CD14-positive monocyte (primary cell): ENCODE measurements at regions of chr1 and their contacts with region 1.

Region 1: DNA sequence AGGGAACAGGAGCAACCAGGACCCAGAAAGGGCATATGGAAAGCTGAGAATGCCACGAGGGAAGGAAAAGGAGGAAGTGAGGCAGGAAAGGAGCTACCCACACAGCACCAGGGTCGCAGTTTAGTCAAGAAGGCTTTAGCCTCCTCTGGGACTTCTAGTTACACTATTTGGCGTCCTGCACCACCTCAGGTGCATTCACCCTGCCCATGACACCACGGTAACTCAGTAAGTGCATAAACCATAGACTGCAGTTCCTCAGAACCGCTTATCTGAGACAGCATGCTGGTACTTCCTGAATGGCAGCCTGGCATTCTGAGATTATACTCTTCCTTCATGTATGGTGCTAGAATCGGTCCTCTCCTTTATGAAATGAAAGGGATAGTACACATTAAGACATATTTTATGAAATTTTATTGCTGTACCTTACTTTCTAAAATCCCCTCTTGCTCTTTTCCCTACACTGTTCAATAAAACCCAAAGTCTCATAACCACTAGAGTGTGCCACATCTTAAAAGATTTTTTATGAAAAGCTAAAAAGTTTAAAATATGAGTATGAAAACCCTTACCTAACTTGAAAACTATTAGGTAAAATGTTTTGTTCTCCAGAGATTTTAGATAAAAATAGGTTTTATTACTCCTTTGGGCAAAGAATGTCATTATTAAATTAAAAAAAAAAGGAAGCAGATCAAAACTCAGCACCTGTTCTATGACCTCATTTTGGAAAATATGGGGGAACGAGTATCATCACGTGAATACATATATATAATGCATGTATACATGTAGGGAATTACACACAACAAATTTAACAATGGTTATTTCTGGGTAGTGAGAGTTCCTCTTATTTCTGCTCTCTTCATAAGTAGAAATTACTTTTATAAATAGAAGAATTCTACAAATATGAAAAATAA is 67.3 kb downstream of the VAV3 start:
- DNase-seq: peak in 2 of 3 donors; percentile 36 to 37
- H3K4me3 ChIP-seq: peak overlapping the region; percentile 31 to 70 (median 50)
- H3K4me3 Mint-ChIP-seq: peak overlapping the region; percentile 69 to 92
- H3K27ac ChIP-seq: peak overlapping the region in 1 of 2 donors; percentile 73
- H3K27ac Mint-ChIP-seq: peak overlapping the region in 5 of 7 donors; percentile 62 to 87 (median 78)
- H3K4me1 ChIP-seq: peaks cover 22 to 28% of the 10 kb centered on the region in 2 donors
- H3K4me1 Mint-ChIP-seq: peaks cover 50% of the 10 kb centered on the region
- H3K27me3 ChIP-seq: no peaks in the 10 kb centered on the region
- H3K27me3 Mint-ChIP-seq: peaks cover 0 to 2% (median 0%) of the 10 kb centered on the region in 3 donors
- CTCF ChIP-seq: no peak

Region 2: DNA sequence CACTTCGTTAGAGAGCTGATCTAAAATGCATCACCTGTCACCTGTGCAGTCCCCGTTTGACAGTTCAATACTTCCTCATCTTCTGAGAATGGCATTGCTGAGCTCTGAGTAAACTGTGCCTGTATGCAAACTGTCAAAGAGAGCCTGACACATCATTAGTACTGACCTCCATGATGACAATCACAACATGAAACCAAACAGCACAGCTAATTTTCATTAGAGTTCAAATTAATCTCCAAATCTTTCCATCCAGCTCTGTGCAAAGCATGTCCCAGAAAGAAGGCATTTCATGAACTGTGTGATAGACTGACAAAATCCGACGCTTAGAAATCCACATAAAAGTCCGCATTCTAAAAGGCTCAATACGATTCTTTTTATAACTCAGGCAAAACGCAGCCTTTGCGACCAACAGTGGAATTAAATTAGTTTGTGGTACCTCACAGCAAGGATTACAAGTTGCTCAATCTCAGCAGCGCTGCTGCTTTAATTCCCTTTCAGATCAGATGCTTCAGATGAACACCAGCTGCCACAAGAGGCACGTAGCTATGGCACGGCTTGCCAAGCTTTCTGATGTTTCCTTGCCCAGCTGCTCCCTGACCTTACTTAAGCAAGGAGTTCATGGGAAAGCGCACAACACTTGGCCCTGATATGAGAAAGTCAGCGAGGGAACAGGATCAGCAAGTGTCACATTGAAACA is 1606.7 kb before region 1 on chr1:
- intact Hi-C with region 1: no loop called
- DNase-seq: no peak
- H3K4me3 ChIP-seq: no peak overlapping the region
- H3K4me3 Mint-ChIP-seq: no peak overlapping the region
- H3K27ac ChIP-seq: no peak overlapping the region
- H3K27ac Mint-ChIP-seq: no peak overlapping the region
- H3K4me1 ChIP-seq: no peaks in the 10 kb centered on the region
- H3K4me1 Mint-ChIP-seq: no peaks in the 10 kb centered on the region
- H3K27me3 ChIP-seq: no peaks in the 10 kb centered on the region
- H3K27me3 Mint-ChIP-seq: no peaks in the 10 kb centered on the region
- CTCF ChIP-seq: no peak

Region 3: DNA sequence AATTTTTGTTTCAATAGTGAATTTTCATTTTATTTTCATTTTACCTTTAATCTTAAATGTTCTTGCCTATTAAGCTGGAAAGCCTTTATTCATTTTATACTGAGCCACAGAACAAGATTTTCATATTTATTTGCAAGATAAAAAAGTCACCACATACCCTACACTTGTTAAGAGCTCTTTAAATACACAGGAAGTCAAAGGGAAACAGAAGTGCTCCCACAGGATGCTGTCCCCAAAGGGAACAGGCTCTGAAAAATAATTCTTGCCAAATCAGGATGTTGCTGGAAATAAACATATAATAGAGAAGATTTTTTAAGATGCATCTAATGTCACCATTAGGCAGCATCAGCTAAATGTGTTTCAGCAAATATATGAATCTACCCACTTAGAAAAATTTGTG is 46.3 kb before region 1 on chr1:
- intact Hi-C with region 1: loop called in 1 of 2 experiments (anchors 10 kb)
- DNase-seq: no peak
- H3K4me3 ChIP-seq: no peak overlapping the region
- H3K4me3 Mint-ChIP-seq: no peak overlapping the region
- H3K27ac ChIP-seq: no peak overlapping the region
- H3K27ac Mint-ChIP-seq: no peak overlapping the region
- H3K4me1 ChIP-seq: no peaks in the 10 kb centered on the region
- H3K4me1 Mint-ChIP-seq: peaks cover 22% of the 10 kb centered on the region
- H3K27me3 ChIP-seq: no peaks in the 10 kb centered on the region
- H3K27me3 Mint-ChIP-seq: no peaks in the 10 kb centered on the region
- CTCF ChIP-seq: no peak

Region 4: DNA sequence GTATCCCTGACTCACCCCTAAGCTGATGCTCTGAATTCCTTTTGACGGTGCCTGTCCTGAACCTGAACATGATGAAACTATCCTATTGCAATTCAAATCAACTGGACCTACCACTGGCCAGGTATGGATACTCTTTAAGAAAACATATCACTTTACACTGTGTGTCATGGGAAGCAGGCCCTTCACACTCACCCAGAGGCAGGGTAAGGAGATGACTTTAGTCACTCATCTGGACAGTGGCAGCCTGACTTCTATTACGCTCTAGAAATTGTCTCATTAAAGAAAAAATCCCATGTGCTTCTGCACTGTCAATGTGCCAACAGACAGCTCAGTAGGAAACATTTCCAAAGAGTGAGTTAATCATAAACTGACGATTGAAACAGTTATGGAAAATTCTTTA is 27.0 kb before region 1 on chr1:
- intact Hi-C with region 1: no loop called
- DNase-seq: no peak
- H3K4me3 ChIP-seq: no peak overlapping the region
- H3K4me3 Mint-ChIP-seq: no peak overlapping the region
- H3K27ac ChIP-seq: no peak overlapping the region
- H3K27ac Mint-ChIP-seq: no peak overlapping the region
- H3K4me1 ChIP-seq: peaks cover 25 to 33% of the 10 kb centered on the region in 2 donors
- H3K4me1 Mint-ChIP-seq: peaks cover 44% of the 10 kb centered on the region
- H3K27me3 ChIP-seq: no peaks in the 10 kb centered on the region
- H3K27me3 Mint-ChIP-seq: peaks cover 0 to 2% (median 0%) of the 10 kb centered on the region in 3 donors
- CTCF ChIP-seq: no peak